Endothelial cell of umbilical vein (primary cell): ENCODE measurements at regions of chr10 and their contacts with region 1.

Region 1: GRCh38 chr10:95693668-95694534 is at the start of gene TCTN3:
- DNase-seq: peak; percentile 100
- H3K4me3 ChIP-seq: peak within 1 kb of the TSS; percentile 48 to 83 (median 68)
- H3K27ac ChIP-seq: peak within 1 kb of the TSS; percentile 26
- H3K4me1 ChIP-seq: peaks cover 13% of the 10 kb centered on the region
- H3K27me3 ChIP-seq: no peaks in the 10 kb centered on the region
- CTCF ChIP-seq: peak; percentile 99 to 100
- POLR2A ChIP-seq: peak; percentile 67
- total RNA-seq, gene TCTN3: 40.4 and 42.9 TPM in 2 replicates

Region 2: DNA sequence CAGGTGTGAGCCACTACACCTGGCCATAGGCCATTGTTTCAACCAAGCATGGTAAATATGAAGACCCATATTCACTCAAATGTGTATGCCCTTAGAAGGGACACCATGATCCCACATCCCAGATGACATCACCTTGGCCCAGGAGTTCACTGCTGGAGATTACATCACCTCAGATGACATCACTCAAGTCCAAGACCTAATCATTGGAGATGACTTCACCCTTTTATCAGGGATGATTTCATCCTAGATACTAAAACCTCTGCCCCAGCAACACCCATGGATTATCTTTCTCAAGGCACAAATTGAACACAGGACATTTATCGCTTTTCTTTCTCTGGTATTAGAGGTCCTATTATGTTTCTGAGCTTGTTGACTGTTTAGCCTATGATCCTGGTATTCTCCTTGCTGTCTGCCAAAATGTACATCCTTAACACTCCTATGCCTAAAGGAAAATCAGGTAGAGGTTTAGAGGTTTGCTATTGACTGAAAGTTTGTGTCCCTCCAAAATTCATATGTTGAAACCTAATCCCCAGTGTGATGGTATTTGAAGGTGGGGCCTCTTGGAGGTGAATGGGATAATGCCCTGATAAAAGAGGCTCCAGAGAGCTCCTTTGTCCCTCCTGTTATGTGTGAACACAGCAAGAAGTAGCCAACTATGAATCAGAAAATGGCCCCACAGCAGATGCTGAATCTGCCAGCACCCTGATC is 1020.1 kb before region 1 on chr10:
- CTCF ChIA-PET with region 1: no interaction called
- POLR2A ChIA-PET with region 1: no interaction called
- dilution Hi-C with region 1: no loop called
- intact Hi-C with region 1: no loop called
- DNase-seq: no peak
- H3K4me3 ChIP-seq: no peak overlapping the region
- H3K27ac ChIP-seq: no peak overlapping the region
- H3K4me1 ChIP-seq: no peaks in the 10 kb centered on the region
- H3K27me3 ChIP-seq: no peaks in the 10 kb centered on the region
- CTCF ChIP-seq: no peak
- POLR2A ChIP-seq: no peak

Region 3: DNA sequence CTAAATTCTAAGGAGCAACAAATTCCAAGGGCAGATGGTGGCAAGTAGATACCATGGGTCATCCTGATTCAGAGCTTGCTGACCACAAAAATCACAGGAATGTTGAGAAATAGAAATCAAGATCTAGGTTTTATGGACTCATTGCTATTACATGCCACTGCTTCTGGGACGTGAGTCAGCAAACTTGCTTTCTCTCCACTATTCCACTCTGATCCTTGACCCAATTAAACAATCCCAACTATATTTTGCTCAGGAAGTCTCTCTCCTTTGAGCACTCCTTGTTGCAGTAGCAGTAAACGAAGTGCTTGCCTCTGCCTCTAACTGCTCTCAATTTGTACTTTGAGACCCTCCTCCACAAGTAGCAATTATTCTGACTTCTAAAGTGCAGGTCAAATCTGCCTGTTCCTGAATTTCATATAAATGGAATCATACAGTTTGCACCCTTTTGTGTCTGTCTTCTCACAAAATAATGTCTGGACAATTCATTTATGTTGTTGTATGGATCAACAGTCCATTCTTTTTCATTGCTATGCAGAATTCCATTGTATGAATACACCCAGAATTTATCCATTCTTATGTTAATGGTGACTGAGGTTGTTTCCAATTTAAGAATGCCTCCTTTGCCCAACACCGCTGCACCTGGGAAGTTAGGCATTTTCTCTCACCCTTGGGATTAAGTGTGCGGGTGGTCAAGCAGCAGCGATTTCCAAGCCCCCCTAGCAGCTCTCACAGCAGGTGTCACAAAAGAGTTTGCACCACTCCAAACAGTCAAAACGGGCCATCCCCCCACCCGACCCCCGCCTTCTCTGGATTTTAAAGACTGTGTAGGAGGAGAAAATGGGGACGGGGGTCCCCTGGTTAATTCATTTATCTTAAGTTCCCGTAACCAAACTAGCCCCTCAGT is 463.9 kb before region 1 on chr10:
- CTCF ChIA-PET with region 1: no interaction called
- POLR2A ChIA-PET with region 1: no interaction called
- dilution Hi-C with region 1: no loop called
- intact Hi-C with region 1: no loop called
- DNase-seq: peak; percentile 62
- H3K4me3 ChIP-seq: peak overlapping the region in 1 of 3 experiments; percentile 44
- H3K27ac ChIP-seq: peak overlapping the region; percentile 61
- H3K4me1 ChIP-seq: peaks cover 11% of the 10 kb centered on the region
- H3K27me3 ChIP-seq: no peaks in the 10 kb centered on the region
- CTCF ChIP-seq: no peak
- POLR2A ChIP-seq: no peak

Region 4: GRCh38 chr10:95663496-95663895 is 30.4 kb before region 1 on chr10:
- CTCF ChIA-PET with region 1: interaction called, 10 read pairs
- POLR2A ChIA-PET with region 1: no interaction called
- dilution Hi-C with region 1: no loop called
- intact Hi-C with region 1: no loop called
- DNase-seq: no peak
- H3K4me3 ChIP-seq: no peak overlapping the region
- H3K27ac ChIP-seq: no peak overlapping the region
- H3K4me1 ChIP-seq: no peaks in the 10 kb centered on the region
- H3K27me3 ChIP-seq: no peaks in the 10 kb centered on the region
- CTCF ChIP-seq: no peak
- POLR2A ChIP-seq: no peak

Region 5: DNA sequence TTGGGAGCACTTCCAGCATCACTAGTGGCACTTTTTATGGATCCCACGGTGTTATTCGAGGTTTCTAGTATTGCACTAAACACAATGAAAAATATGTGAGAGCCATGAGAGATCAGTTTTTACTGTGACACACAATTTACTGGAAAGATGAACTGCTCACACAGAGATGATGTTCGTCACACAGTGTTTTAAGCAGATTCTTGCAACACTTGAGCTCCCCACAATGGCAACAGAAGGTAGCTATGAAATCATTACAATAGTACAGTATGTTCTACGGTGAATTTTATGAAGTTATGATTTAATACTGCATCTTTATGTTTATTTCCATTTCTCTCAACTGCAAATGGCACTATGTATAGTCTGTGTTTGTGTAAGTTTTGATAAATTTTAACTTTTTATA is 34.6 kb after region 1 on chr10:
- CTCF ChIA-PET with region 1: interaction called, 59 read pairs
- POLR2A ChIA-PET with region 1: no interaction called
- dilution Hi-C with region 1: no loop called
- intact Hi-C with region 1: loop called (anchors 2 kb)
- DNase-seq: peak; percentile 54
- H3K4me3 ChIP-seq: no peak overlapping the region
- H3K27ac ChIP-seq: no peak overlapping the region
- H3K4me1 ChIP-seq: peaks cover 15% of the 10 kb centered on the region
- H3K27me3 ChIP-seq: no peaks in the 10 kb centered on the region
- CTCF ChIP-seq: no peak
- POLR2A ChIP-seq: no peak

Region 6: GRCh38 chr10:95783741-95784140 is 89.8 kb after region 1 on chr10:
- CTCF ChIA-PET with region 1: interaction called, 18 read pairs
- POLR2A ChIA-PET with region 1: no interaction called
- dilution Hi-C with region 1: no loop called
- intact Hi-C with region 1: no loop called
- DNase-seq: no peak
- H3K4me3 ChIP-seq: no peak overlapping the region
- H3K27ac ChIP-seq: no peak overlapping the region
- H3K4me1 ChIP-seq: peaks cover under 1% of the 10 kb centered on the region
- H3K27me3 ChIP-seq: no peaks in the 10 kb centered on the region
- CTCF ChIP-seq: no peak
- POLR2A ChIP-seq: no peak

Region 7: GRCh38 chr10:95832216-95833041 is 138.5 kb after region 1 on chr10:
- CTCF ChIA-PET with region 1: interaction called, 758 read pairs
- POLR2A ChIA-PET with region 1: no interaction called
- dilution Hi-C with region 1: no loop called
- intact Hi-C with region 1: no loop called
- DNase-seq: no peak
- H3K4me3 ChIP-seq: no peak overlapping the region
- H3K27ac ChIP-seq: no peak overlapping the region
- H3K4me1 ChIP-seq: no peaks in the 10 kb centered on the region
- H3K27me3 ChIP-seq: no peaks in the 10 kb centered on the region
- CTCF ChIP-seq: no peak
- POLR2A ChIP-seq: no peak

Region 8: GRCh38 chr10:96017191-96017687 is 323.3 kb after region 1 on chr10:
- CTCF ChIA-PET with region 1: interaction called, 17 read pairs
- POLR2A ChIA-PET with region 1: no interaction called
- dilution Hi-C with region 1: no loop called
- intact Hi-C with region 1: loop called (anchors 1 kb)
- DNase-seq: peak; percentile 87
- H3K4me3 ChIP-seq: no peak overlapping the region
- H3K27ac ChIP-seq: no peak overlapping the region
- H3K4me1 ChIP-seq: no peaks in the 10 kb centered on the region
- H3K27me3 ChIP-seq: peaks cover 0 to 8% of the 10 kb centered on the region in 2 experiments
- CTCF ChIP-seq: peak; percentile 65 to 71
- POLR2A ChIP-seq: no peak